HepG2 (cell line): ENCODE measurements at regions of chr5 and their contacts with region 1.

Region 1: GRCh38 chr5:147558826-147559225 is 49.0 kb upstream of the DPYSL3 start:
- DNase-seq: no peak
- ATAC-seq: peak; percentile 57; the same call in 2 of the 3 replicates
- H3K4me3 ChIP-seq: no peak overlapping the region
- H3K27ac ChIP-seq: no peak overlapping the region
- H3K4me1 ChIP-seq: no peaks in the 10 kb centered on the region
- H3K27me3 ChIP-seq: peaks cover 0 to 1% of the 10 kb centered on the region in 2 experiments; a peak in 1 of 5 replicates
- CTCF ChIP-seq: peak; percentile 24; the same call in 1 of the 2 replicates
- EP300 ChIP-seq: no peak
- POLR2A ChIP-seq: no peak
- RAD21 ChIP-seq: no peak

Region 2: DNA sequence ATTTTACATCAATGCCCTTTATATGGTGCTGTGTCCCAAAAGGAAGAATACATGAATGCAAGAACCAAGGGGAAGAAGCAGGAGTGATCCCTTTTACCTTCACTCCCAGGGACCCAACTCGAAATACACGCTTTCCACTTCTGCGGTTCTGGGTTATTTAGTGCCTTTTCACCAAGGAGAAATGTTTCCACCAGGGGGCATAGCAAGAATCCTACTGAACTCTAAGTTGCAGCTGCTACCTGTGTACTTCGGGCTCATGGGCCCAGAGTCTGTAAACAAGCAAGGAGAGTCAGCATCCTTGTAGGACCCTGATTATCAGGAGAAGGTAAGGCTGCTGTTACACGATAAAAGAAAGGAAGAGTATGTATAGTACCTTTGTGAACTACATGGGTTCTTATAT is 94.6 kb before region 1 on chr5:
- CTCF ChIA-PET with region 1: no interaction called
- POLR2A ChIA-PET with region 1: no interaction called
- in situ Hi-C with region 1: no loop called
- intact Hi-C with region 1: loop called (anchors 1 kb)
- DNase-seq: peak; percentile 11
- ATAC-seq: peak; percentile 81
- H3K4me3 ChIP-seq: no peak overlapping the region
- H3K27ac ChIP-seq: no peak overlapping the region
- H3K4me1 ChIP-seq: no peaks in the 10 kb centered on the region
- H3K27me3 ChIP-seq: no peaks in the 10 kb centered on the region
- CTCF ChIP-seq: peak; percentile 40; the same call in 1 of the 2 replicates
- EP300 ChIP-seq: no peak
- POLR2A ChIP-seq: no peak
- RAD21 ChIP-seq: no peak

Region 3: DNA sequence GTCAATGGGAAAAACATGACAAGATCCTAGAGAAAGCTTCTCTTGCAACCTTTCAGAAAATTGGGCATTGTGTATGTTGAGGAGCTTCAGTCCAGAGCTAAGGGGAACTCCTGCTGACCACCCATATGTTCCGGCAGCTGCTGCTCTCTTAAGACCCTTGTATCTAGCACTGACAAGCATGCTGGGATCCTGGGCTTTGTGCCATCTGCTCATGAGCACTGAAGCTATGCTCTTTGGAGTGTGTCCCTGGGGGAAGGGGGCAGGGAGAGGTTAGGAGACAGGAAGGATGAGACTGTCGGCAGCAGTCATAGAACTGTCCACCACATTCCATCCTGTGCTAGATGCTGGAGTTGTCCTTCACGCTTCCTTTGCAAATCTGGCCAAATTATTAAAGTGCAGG is 114.4 kb after region 1 on chr5:
- CTCF ChIA-PET with region 1: no interaction called
- POLR2A ChIA-PET with region 1: no interaction called
- in situ Hi-C with region 1: no loop called
- intact Hi-C with region 1: no loop called
- DNase-seq: no peak
- ATAC-seq: no peak
- H3K4me3 ChIP-seq: no peak overlapping the region
- H3K27ac ChIP-seq: no peak overlapping the region
- H3K4me1 ChIP-seq: peaks cover 19% of the 10 kb centered on the region
- H3K27me3 ChIP-seq: no peaks in the 10 kb centered on the region
- CTCF ChIP-seq: no peak
- EP300 ChIP-seq: no peak
- POLR2A ChIP-seq: no peak
- RAD21 ChIP-seq: no peak